PC-9 (cell line): ENCODE measurements at regions of chr7 and their contacts with region 1.

Region 1: DNA sequence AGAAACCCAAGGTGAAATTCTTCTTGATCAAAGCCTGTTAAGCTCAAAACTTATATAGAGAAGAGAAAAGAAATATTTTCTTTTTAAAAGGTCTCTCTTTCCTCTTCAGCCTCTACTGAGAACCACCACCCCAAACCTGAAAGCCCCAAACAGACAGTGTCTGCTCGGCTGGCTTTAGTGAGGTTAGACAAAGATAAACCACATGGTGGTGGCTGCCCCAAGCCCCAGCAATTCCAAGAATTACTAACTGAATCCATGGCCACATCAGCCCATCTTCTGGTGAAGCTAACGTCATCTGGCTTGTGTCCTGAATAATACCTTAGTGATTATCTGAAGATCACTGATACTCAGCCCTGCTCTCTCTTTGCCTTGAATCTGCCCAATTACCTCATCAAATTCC is 275.0 kb downstream of the ELMO1 start:
- DNase-seq: no peak
- H3K4me3 ChIP-seq: no peak overlapping the region
- H3K27ac ChIP-seq: no peak overlapping the region
- H3K4me1 ChIP-seq: no peaks in the 10 kb centered on the region
- H3K27me3 ChIP-seq: peaks cover 62% of the 10 kb centered on the region
- CTCF ChIP-seq: no peak

Region 2: DNA sequence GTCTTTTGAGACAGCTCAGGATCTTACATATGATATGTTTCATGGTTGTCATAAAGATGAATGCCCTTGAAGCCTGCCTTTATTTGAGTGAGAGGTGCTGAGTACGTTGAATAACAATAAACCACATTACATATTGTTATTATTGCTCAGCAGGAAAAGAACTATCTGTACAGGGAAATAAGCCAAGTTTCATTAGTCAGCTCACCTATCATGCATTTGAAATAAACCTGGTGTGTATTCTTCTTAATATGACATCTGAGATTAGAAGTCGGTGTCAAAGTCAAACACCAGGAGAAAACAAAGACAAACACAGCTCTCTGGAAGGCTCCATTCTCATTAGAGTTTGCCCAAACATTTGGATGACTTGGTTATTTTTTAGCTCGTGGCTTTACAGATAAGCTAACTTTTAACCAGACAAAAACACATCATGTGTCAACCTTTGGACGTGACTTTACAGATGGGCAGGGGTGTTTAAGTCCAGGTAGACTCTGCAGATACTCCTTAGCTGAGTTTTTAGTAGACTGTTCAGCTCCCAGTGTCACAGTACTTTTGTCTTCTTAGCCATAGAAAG is 378.1 kb before region 1 on chr7:
- CTCF ChIA-PET with region 1: no interaction called
- POLR2A ChIA-PET with region 1: interaction called, 11 read pairs
- intact Hi-C with region 1: no loop called
- DNase-seq: no peak
- H3K4me3 ChIP-seq: no peak overlapping the region
- H3K27ac ChIP-seq: no peak overlapping the region
- H3K4me1 ChIP-seq: no peaks in the 10 kb centered on the region
- H3K27me3 ChIP-seq: peaks cover 86% of the 10 kb centered on the region
- CTCF ChIP-seq: no peak

Region 3: DNA sequence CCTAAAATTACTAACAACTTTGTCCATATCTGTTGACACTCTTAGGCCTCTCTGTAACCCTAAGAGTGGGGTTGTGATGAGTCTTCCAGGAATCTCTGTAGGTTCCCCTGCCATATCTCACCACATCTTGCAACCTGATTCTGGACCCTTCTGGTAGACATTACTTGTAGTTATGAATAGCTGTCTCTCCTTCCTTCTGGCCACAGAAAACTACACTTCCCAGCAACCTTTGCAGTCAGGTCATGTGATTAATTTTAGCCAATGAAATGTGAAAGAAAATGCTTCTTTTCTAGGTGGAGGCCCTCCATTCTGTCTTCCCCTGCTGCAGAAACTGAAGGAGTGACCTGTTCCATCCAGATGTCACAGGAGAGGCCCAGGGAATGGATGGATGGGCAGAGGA is 301.8 kb before region 1 on chr7:
- CTCF ChIA-PET with region 1: no interaction called
- POLR2A ChIA-PET with region 1: no interaction called
- intact Hi-C with region 1: no loop called
- DNase-seq: no peak
- H3K4me3 ChIP-seq: no peak overlapping the region
- H3K27ac ChIP-seq: no peak overlapping the region
- H3K4me1 ChIP-seq: no peaks in the 10 kb centered on the region
- H3K27me3 ChIP-seq: peaks cover 22% of the 10 kb centered on the region; the same call in 1 of the 2 replicates
- CTCF ChIP-seq: no peak